AG04450 (cell line): ENCODE measurements at regions of chr3 and their contacts with region 1.

Region 1: GRCh38 chr3:12175844-12176453 is 17.2 kb upstream of the TIMP4 start:
- DNase-seq: no peak
- H3K4me3 ChIP-seq: no peak overlapping the region
- H3K27ac ChIP-seq: no peak overlapping the region
- H3K27me3 ChIP-seq: no peaks in the 10 kb centered on the region
- CTCF ChIP-seq: peak; percentile 90

Region 2: DNA sequence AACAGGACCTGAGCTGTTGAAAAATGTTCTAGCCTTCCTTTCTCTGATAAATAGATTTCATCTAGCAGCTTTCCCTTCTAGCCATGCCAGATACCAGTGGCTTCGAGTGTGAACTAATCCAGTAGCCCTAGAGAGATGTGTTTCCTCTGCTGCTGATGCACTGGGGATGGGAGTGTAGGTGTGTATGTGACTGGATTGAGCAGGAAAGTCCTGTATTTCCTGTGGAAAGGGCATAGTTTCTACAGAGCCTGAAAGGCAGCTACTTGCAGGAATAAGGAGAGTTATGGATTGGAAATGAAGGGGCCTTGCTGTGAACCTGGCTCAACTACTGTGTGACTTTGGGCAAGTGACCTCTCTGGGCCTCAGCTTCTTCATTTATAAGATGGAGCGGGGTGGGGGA is 25.8 kb before region 1 on chr3:
- CTCF ChIA-PET with region 1: interaction called, 306 read pairs
- POLR2A ChIA-PET with region 1: interaction called, 6 read pairs
- DNase-seq: no peak
- H3K4me3 ChIP-seq: no peak overlapping the region
- H3K27ac ChIP-seq: no peak overlapping the region
- H3K27me3 ChIP-seq: peaks cover 19% of the 10 kb centered on the region
- CTCF ChIP-seq: no peak

Region 3: GRCh38 chr3:12155823-12156222 is 20.1 kb before region 1 on chr3:
- CTCF ChIA-PET with region 1: interaction called, 22 read pairs
- POLR2A ChIA-PET with region 1: no interaction called
- DNase-seq: no peak
- H3K4me3 ChIP-seq: no peak overlapping the region
- H3K27ac ChIP-seq: no peak overlapping the region
- H3K27me3 ChIP-seq: peaks cover 11% of the 10 kb centered on the region
- CTCF ChIP-seq: no peak

Region 4: GRCh38 chr3:12187448-12188327 is 11.7 kb after region 1 on chr3:
- CTCF ChIA-PET with region 1: interaction called, 32 read pairs
- POLR2A ChIA-PET with region 1: no interaction called
- DNase-seq: no peak
- H3K4me3 ChIP-seq: no peak overlapping the region
- H3K27ac ChIP-seq: peak overlapping the region; percentile 92
- H3K27me3 ChIP-seq: no peaks in the 10 kb centered on the region
- CTCF ChIP-seq: no peak

Region 5: GRCh38 chr3:12444582-12445468 is 268.9 kb after region 1 on chr3:
- CTCF ChIA-PET with region 1: no interaction called
- POLR2A ChIA-PET with region 1: no interaction called
- DNase-seq: no peak
- H3K4me3 ChIP-seq: no peak overlapping the region
- H3K27ac ChIP-seq: peak overlapping the region; percentile 31
- H3K27me3 ChIP-seq: peaks cover 4% of the 10 kb centered on the region
- CTCF ChIP-seq: no peak